ENCODE measurements at regions of chr22 and their contacts with region 1.

Region 1: DNA sequence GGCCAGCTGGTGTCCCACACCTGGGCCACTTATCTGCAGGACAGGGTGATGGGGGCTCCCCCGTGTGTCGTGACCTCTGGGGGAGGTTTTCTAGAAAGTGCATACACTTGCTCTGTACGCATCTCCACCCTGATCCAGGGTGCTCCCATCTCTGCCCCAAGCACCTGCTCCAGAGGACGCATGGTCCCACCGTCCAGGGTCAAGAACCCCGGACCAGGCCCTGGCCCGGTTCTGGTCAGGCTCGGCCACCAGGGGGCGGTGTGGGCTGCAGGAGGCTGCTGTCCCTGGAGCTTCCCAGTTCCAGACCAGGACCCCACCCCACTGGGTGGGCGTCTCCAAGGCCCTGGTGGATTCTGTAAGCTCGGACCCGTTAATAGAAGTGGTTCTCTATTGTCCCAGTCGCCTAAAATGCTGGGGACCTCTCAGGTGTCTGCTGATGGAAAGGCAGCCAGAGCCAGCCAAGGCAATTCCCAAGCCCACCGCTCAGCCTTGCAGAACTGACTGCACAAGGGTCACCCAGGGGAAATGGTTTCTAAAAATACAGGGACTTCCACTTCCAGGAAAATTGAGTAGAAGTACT is 34.7 kb upstream of the SEPTIN5 start:
- DNase-seq: no peak

Region 2: GRCh38 chr22:19717691-19718455 is 38.3 kb after region 1 on chr22:
- intact Hi-C with region 1: loop called in 1 of 2 experiments (anchors 5 kb)
- DNase-seq: peak; percentile 95

Measured in posterior vena cava (tissue), 2 donors.